ENCODE measurements at regions of chr13 and their contacts with region 1.

Region 1: GRCh38 chr13:50691681-50692263 is 151.7 kb downstream of the DLEU7 start:
- DNase-seq: no peak
- H3K4me3 ChIP-seq: no peak overlapping the region
- H3K27ac ChIP-seq: no peak overlapping the region
- H3K4me1 ChIP-seq: peaks cover 6% of the 10 kb centered on the region
- H3K27me3 ChIP-seq: no peaks in the 10 kb centered on the region
- CTCF ChIP-seq: no peak

Region 2: DNA sequence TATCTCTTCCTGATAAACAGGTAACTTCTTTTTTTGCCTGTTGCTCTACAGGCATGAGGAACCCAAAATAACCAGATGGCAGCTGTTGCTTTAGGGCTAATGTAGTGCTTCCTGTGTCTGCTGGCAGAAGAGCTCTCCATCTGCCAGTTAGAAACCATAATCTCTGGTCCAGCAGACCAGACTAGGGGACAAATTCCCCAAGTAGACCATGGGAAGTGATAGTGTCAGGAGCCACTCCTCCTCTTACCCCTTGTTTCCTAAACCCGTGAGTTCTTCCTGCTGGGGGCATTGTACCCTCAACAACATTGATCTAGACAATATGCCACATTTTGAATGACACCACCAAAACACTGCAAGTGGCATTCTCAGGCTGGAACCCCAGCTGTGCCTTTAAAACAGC is 15.9 kb after region 1 on chr13:
- CTCF ChIA-PET with region 1: no interaction called
- dilution Hi-C with region 1: no loop called
- in situ Hi-C with region 1: no loop called
- intact Hi-C with region 1: loop called (anchors 1 kb)
- DNase-seq: no peak
- H3K4me3 ChIP-seq: no peak overlapping the region
- H3K27ac ChIP-seq: no peak overlapping the region
- H3K4me1 ChIP-seq: no peaks in the 10 kb centered on the region
- H3K27me3 ChIP-seq: no peaks in the 10 kb centered on the region
- CTCF ChIP-seq: no peak

Region 3: GRCh38 chr13:50740052-50740741 is 48.4 kb after region 1 on chr13:
- CTCF ChIA-PET with region 1: no interaction called
- dilution Hi-C with region 1: no loop called
- in situ Hi-C with region 1: no loop called
- intact Hi-C with region 1: no loop called
- DNase-seq: no peak
- H3K4me3 ChIP-seq: no peak overlapping the region
- H3K27ac ChIP-seq: no peak overlapping the region
- H3K4me1 ChIP-seq: no peaks in the 10 kb centered on the region
- H3K27me3 ChIP-seq: no peaks in the 10 kb centered on the region
- CTCF ChIP-seq: no peak

Region 4: GRCh38 chr13:50788551-50789210 is 96.9 kb after region 1 on chr13:
- CTCF ChIA-PET with region 1: no interaction called
- dilution Hi-C with region 1: no loop called
- in situ Hi-C with region 1: no loop called
- intact Hi-C with region 1: no loop called
- DNase-seq: peak; percentile 9
- H3K4me3 ChIP-seq: no peak overlapping the region
- H3K27ac ChIP-seq: no peak overlapping the region
- H3K4me1 ChIP-seq: no peaks in the 10 kb centered on the region
- H3K27me3 ChIP-seq: no peaks in the 10 kb centered on the region
- CTCF ChIP-seq: no peak